Endothelial cell of umbilical vein (primary cell): ENCODE measurements at regions of chr9 and their contacts with region 1.

Region 1: GRCh38 chr9:37415011-37415719 is 7.3 kb upstream of the GRHPR start:
- DNase-seq: peak; percentile 80
- H3K4me3 ChIP-seq: no peak overlapping the region
- H3K27ac ChIP-seq: no peak overlapping the region
- H3K4me1 ChIP-seq: no peaks in the 10 kb centered on the region
- H3K27me3 ChIP-seq: no peaks in the 10 kb centered on the region
- CTCF ChIP-seq: peak; percentile 66 to 85
- POLR2A ChIP-seq: no peak

Region 2: GRCh38 chr9:37503736-37504135 is 88.6 kb after region 1 on chr9:
- CTCF ChIA-PET with region 1: no interaction called
- POLR2A ChIA-PET with region 1: no interaction called
- dilution Hi-C with region 1: no loop called
- intact Hi-C with region 1: loop called (anchors 10 kb)
- DNase-seq: no peak
- H3K4me3 ChIP-seq: no peak overlapping the region
- H3K27ac ChIP-seq: no peak overlapping the region
- H3K4me1 ChIP-seq: no peaks in the 10 kb centered on the region
- H3K27me3 ChIP-seq: no peaks in the 10 kb centered on the region
- CTCF ChIP-seq: no peak
- POLR2A ChIP-seq: no peak